B cell (primary cell): ENCODE measurements at regions of chr3 and their contacts with region 1.

Region 1: GRCh38 chr3:196609343-196609775 is 30.1 kb upstream of the NRROS start:
- DNase-seq: peak; percentile 93
- ATAC-seq: peak; percentile 92
- H3K4me3 ChIP-seq: peak overlapping the region in 2 of 5 experiments; percentile 5 to 11
- H3K4me3 Mint-ChIP-seq: peak overlapping the region; percentile 70
- H3K27ac ChIP-seq: peak overlapping the region in 1 of 2 donors; percentile 15
- H3K27ac Mint-ChIP-seq: peak overlapping the region; percentile 86
- H3K4me1 ChIP-seq: peaks cover 8 to 12% of the 10 kb centered on the region in 2 donors
- H3K4me1 Mint-ChIP-seq: peaks cover 15% of the 10 kb centered on the region
- H3K27me3 ChIP-seq: no peaks in the 10 kb centered on the region
- H3K27me3 Mint-ChIP-seq: no peaks in the 10 kb centered on the region
- CTCF ChIP-seq: peak; percentile 92

Region 2: GRCh38 chr3:195932456-195933430 is 676.6 kb before region 1 on chr3:
- CTCF ChIA-PET with region 1: no interaction called
- POLR2A ChIA-PET with region 1: no interaction called
- intact Hi-C with region 1: no loop called
- DNase-seq: no peak
- ATAC-seq: no peak
- H3K4me3 ChIP-seq: no peak overlapping the region
- H3K4me3 Mint-ChIP-seq: no peak overlapping the region
- H3K27ac ChIP-seq: no peak overlapping the region
- H3K27ac Mint-ChIP-seq: no peak overlapping the region
- H3K4me1 ChIP-seq: no peaks in the 10 kb centered on the region
- H3K4me1 Mint-ChIP-seq: no peaks in the 10 kb centered on the region
- H3K27me3 ChIP-seq: no peaks in the 10 kb centered on the region
- H3K27me3 Mint-ChIP-seq: no peaks in the 10 kb centered on the region
- CTCF ChIP-seq: no peak

Region 3: GRCh38 chr3:196568246-196569002 is 40.9 kb before region 1 on chr3 and contains the starts of genes FBXO45 and WDR53:
- CTCF ChIA-PET with region 1: interaction called, 4 read pairs
- POLR2A ChIA-PET with region 1: no interaction called
- intact Hi-C with region 1: loop called (anchors 2 kb)
- DNase-seq: peak; percentile 97
- ATAC-seq: peak; percentile 90
- H3K4me3 ChIP-seq: peak within 1 kb of the TSS; percentile 89 to 99 (median 97)
- H3K4me3 Mint-ChIP-seq: peak within 1 kb of the TSS; percentile 98
- H3K27ac ChIP-seq: peak within 1 kb of the TSS; percentile 74 to 94
- H3K27ac Mint-ChIP-seq: peak within 1 kb of the TSS; percentile 95
- H3K4me1 ChIP-seq: peaks cover 17 to 21% of the 10 kb centered on the region in 2 donors
- H3K4me1 Mint-ChIP-seq: peaks cover 28% of the 10 kb centered on the region
- H3K27me3 ChIP-seq: no peaks in the 10 kb centered on the region
- H3K27me3 Mint-ChIP-seq: no peaks in the 10 kb centered on the region
- CTCF ChIP-seq: no peak
- total RNA-seq, gene FBXO45: 4.7 and 5.2 TPM in 2 replicates
- total RNA-seq, gene WDR53: 18.2 and 21.0 TPM in 2 replicates

Region 4: GRCh38 chr3:196624067-196624790 is 14.9 kb after region 1 on chr3:
- CTCF ChIA-PET with region 1: interaction called, 21 read pairs
- POLR2A ChIA-PET with region 1: no interaction called
- intact Hi-C with region 1: loop called (anchors 1 kb)
- DNase-seq: peak; percentile 85
- ATAC-seq: peak; percentile 87
- H3K4me3 ChIP-seq: peak overlapping the region; percentile 14 to 48 (median 21)
- H3K4me3 Mint-ChIP-seq: peak overlapping the region; percentile 76
- H3K27ac ChIP-seq: peak overlapping the region; percentile 37 to 48
- H3K27ac Mint-ChIP-seq: peak overlapping the region; percentile 79
- H3K4me1 ChIP-seq: peaks cover 11 to 22% of the 10 kb centered on the region in 2 donors
- H3K4me1 Mint-ChIP-seq: peaks cover 18% of the 10 kb centered on the region
- H3K27me3 ChIP-seq: no peaks in the 10 kb centered on the region
- H3K27me3 Mint-ChIP-seq: no peaks in the 10 kb centered on the region
- CTCF ChIP-seq: no peak

Region 5: DNA sequence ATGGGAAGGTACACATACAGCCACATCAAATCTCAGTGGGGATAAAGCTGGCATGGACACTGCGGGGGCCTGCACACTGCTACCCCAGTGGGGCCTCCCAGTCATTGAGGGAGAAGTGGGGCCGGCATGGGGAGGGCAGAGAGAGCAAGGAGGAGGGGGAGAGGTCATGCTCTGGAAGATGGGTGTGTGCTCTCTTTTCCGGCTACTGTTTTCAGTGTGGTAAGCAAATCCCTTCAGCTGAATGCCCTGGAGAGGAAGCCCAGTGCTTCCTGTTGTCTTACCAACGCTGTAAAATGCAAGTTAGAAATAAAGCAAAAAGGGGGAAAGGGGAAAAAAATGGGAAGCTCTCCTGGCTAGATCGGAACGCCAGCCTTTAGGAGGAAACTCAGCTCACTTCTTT is 61.0 kb after region 1 on chr3:
- CTCF ChIA-PET with region 1: interaction called, 12 read pairs
- POLR2A ChIA-PET with region 1: no interaction called
- intact Hi-C with region 1: no loop called
- DNase-seq: peak; percentile 36
- ATAC-seq: peak; percentile 78
- H3K4me3 ChIP-seq: peak overlapping the region; percentile 8 to 46 (median 23)
- H3K4me3 Mint-ChIP-seq: peak overlapping the region; percentile 78
- H3K27ac ChIP-seq: peak overlapping the region; percentile 31 to 71
- H3K27ac Mint-ChIP-seq: peak overlapping the region; percentile 78
- H3K4me1 ChIP-seq: peaks cover 26 to 32% of the 10 kb centered on the region in 2 donors
- H3K4me1 Mint-ChIP-seq: peaks cover 50% of the 10 kb centered on the region
- H3K27me3 ChIP-seq: no peaks in the 10 kb centered on the region
- H3K27me3 Mint-ChIP-seq: no peaks in the 10 kb centered on the region
- CTCF ChIP-seq: no peak

Region 6: DNA sequence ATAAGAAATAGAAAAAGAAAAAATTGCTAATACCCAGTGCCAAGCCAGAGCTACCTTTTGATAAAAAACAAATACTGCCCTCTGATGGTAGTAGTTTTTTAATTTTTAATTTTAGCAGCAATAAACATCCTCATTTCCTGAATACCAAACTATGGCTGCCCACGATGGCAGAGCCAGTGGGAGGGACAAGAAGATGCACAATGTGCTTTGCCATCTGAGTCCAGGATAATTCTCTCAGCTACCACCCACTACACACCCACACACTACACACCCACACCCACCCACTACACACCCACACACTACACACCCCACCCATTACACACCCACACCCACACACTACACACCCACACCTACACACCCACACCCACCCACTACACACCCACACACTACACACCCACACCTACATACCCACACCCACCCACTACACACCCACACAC is 84.9 kb after region 1 on chr3:
- CTCF ChIA-PET with region 1: interaction called, 259 read pairs
- POLR2A ChIA-PET with region 1: no interaction called
- intact Hi-C with region 1: loop called (anchors 1 kb)
- DNase-seq: peak; percentile 54
- ATAC-seq: peak; percentile 60
- H3K4me3 ChIP-seq: no peak overlapping the region
- H3K4me3 Mint-ChIP-seq: no peak overlapping the region
- H3K27ac ChIP-seq: no peak overlapping the region
- H3K27ac Mint-ChIP-seq: no peak overlapping the region
- H3K4me1 ChIP-seq: peaks cover 3 to 11% of the 10 kb centered on the region in 2 donors
- H3K4me1 Mint-ChIP-seq: peaks cover 22% of the 10 kb centered on the region
- H3K27me3 ChIP-seq: no peaks in the 10 kb centered on the region
- H3K27me3 Mint-ChIP-seq: no peaks in the 10 kb centered on the region
- CTCF ChIP-seq: peak; percentile 50

Region 7: GRCh38 chr3:196969660-196970546 is 360.5 kb after region 1 on chr3:
- CTCF ChIA-PET with region 1: interaction called, 11 read pairs
- POLR2A ChIA-PET with region 1: no interaction called
- intact Hi-C with region 1: loop called (anchors 2 kb)
- DNase-seq: peak; percentile 83
- ATAC-seq: peak; percentile 76
- H3K4me3 ChIP-seq: peak overlapping the region; percentile 46 to 82 (median 68)
- H3K4me3 Mint-ChIP-seq: peak overlapping the region; percentile 85
- H3K27ac ChIP-seq: no peak overlapping the region
- H3K27ac Mint-ChIP-seq: peak overlapping the region; percentile 81
- H3K4me1 ChIP-seq: peaks cover 5 to 11% of the 10 kb centered on the region in 2 donors
- H3K4me1 Mint-ChIP-seq: peaks cover 19% of the 10 kb centered on the region
- H3K27me3 ChIP-seq: peaks cover 0 to 4% (median 1%) of the 10 kb centered on the region in 4 experiments
- H3K27me3 Mint-ChIP-seq: peaks cover 9% of the 10 kb centered on the region
- CTCF ChIP-seq: peak; percentile 86